Dorsolateral prefrontal cortex (tissue), 120 donors: ENCODE measurements at regions of chr16 and their contacts with region 1.

Region 1: DNA sequence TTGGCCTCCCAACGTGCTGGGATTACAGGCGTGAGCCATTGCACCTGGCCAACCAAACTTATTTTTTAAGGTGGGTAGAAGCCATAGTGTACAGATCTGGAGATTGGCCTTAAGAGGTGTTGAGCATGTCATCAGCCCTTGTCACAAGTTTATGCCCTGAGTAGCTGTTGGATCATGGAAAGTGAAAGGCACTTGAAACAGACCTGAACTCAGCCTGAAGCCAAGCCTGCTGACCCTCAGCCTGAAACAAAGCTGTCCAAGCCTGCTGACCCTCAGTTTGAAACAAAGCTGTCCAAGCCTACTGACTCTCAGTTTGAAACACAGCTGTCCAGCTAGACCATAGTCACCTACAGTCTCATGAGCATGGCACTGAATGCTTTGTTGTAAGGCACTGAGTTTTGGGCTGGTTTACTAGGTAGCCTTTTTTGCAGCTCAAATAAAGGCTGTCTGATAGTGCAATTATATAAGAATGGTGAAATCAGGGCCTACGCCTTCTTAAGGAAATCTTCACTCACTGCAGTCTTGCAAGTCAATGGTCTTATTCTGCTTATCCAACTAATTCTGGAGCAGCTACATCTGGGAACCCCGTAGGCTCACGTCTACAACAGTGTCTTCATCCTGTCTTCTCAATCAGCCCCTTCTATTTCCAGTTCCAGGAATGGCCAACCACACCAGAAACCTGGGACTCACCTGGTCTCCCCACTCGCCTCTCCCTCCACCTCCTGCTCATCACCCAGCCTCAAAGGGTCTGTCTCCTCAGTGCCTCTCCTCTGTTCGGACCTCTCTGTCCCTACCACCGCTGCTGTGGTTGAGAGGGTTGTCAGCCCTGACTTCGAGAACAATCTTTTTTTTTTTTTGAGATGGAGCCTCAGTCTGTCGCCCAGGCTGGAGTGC is 2.9 kb upstream of the NPIPB15 start:
- DNase-seq: no peak
- H3K4me3 ChIP-seq: no peak overlapping the region
- H3K27ac ChIP-seq: no peak overlapping the region
- H3K27me3 ChIP-seq: no peaks in the 10 kb centered on the region
- CTCF ChIP-seq: no peak

Region 2: GRCh38 chr16:74296432-74297144 is 76.6 kb before region 1 on chr16 and contains the start of gene PSMD7:
- intact Hi-C with region 1: loop called in 1 of 2 experiments (anchors 5 kb)
- DNase-seq: peak; percentile 81 to 96 (median 87)
- H3K4me3 ChIP-seq: peak within 1 kb of the TSS; percentile 68 to 100 (median 98)
- H3K27ac ChIP-seq: peak within 1 kb of the TSS; percentile 62 to 97 (median 91)
- H3K27me3 ChIP-seq: no peaks in the 10 kb centered on the region
- CTCF ChIP-seq: peak in 30 of 56 donors; percentile 2 to 53 (median 31)
- total RNA-seq, gene PSMD7: 46.4 to 109 (median 81.9) TPM

Region 3: DNA sequence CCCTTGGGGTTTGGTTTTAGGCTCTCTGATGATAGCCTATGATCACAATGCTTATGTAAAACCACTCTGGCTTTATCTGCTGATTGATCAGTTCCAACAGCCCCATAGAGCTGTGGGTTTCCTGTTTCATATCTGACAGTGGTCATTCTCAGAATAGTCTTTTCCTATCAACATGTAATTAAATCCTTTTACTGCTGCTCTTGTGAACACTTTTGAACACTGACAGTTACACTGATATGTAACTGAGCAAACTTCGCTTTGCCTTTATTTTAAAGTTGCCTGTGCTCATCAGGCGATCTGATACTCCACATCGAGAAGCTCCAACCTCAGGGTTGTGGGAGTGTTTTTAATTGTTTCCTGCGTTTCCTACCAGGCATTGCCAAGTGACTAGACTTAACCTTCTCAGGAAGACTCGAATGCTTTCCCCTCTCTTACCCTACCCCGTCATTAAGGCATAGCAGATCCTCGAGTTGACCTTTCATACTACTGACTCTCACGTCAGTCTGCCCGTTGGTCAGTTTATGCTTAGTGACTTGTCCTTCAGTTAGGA is 65.4 kb after region 1 on chr16:
- intact Hi-C with region 1: no loop called
- DNase-seq: no peak
- H3K4me3 ChIP-seq: no peak overlapping the region
- H3K27ac ChIP-seq: no peak overlapping the region
- H3K27me3 ChIP-seq: no peaks in the 10 kb centered on the region
- CTCF ChIP-seq: no peak